Sciatic nerve (tissue), 2 donors: ENCODE measurements at regions of chr2 and their contacts with region 1.

Region 1: GRCh38 chr2:223563462-223563861 is 38.7 kb downstream of the SCG2 start:
- DNase-seq: no peak
- ATAC-seq: no peak

Region 2: DNA sequence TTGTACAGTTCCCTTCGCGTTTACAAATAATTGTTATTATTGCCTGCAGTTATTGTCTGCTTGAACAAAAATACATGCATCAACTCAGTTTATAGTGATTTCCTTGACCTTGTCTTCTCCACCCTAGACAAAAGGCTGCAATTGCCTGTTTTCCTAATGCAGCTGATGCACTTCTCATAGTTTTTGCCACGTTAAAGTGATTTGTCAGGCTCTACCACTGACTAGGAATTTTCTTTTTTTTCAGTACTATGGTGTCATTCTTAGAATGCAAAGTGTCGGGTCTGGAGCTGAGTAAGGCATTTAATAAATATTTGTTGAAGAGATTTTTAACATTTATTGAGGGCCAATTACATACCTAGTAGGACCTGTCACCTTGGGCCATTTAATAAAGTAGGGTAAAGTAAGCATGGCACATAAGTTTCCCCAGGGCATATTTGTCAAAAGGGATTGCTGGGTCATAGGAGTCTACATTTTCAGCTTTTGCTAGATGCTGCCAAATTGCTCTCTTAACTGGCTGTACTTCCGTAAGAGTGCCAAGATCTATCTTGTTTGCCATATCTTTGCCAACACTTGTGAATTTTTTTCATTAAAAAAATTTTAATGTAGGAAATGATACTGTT is 678.5 kb before region 1 on chr2:
- intact Hi-C with region 1: loop called (anchors 5 kb)
- DNase-seq: no peak
- ATAC-seq: no peak

Region 3: GRCh38 chr2:223580951-223581350 is 17.5 kb after region 1 on chr2:
- intact Hi-C with region 1: loop called (anchors 1 kb)
- DNase-seq: no peak
- ATAC-seq: peak; percentile 63